H1 (cell line): ENCODE measurements at regions of chr7 and their contacts with region 1.

Region 1: DNA sequence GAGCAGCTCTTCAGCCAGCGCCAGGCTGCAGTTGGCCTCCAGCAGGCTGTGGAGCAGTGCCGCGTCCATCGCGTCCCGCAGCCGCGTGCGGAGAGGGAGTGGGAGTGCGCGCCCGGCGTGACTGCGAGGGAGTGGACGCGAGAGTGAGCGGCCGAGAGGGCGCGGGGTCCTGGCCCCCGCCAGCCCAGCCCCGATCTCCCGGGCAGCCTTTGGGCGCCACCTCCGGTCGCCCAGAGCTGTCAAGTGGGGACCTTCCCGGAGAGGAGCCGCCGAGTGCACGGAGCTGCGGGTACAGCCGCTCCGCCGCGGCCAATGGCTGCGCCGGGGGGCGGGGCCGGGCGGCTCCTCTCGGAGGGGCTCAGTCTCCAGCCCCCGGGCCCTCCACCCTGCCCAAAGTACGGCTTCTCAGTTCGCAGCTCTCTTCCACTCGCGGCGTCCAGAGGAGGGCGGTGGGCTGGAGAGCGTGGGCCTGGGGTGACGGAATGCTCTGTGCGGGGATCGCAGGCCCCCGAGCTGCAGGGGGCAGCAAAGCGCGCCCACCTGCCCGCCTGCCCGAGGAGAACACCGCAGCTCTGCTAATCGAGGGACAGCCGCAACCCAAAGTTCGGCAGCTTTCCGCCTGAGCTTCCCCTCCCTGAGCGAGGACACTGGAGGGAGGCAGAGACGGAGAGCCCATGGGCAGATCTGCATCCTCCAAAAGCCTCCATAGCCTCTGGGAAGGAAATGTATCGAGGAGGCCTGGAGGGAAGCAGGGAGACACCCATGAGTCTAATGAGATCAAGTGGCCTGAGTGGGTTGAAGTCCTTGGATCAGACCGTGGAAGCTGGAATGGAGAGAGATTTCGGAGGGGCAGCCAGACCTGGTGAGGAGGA is at the start of gene CRHR2:
- DNase-seq: peak in 1 of 2 experiments; percentile 81
- H3K4me3 ChIP-seq: peak within 1 kb of the TSS; percentile 42 to 67 (median 50)
- H3K27ac ChIP-seq: no peak within 1 kb of the TSS
- H3K4me1 ChIP-seq: peaks cover 6 to 16% (median 7%) of the 10 kb centered on the region in 4 experiments
- H3K27me3 ChIP-seq: peaks cover 10 to 49% (median 41%) of the 10 kb centered on the region in 4 experiments
- CTCF ChIP-seq: peak; percentile 45 to 63 (median 55); a peak in 3 of 4 replicates
- EP300 ChIP-seq: no peak
- POLR2A ChIP-seq: no peak
- RAD21 ChIP-seq: peak; percentile 38 to 50; a peak in 3 of 4 replicates
- total RNA-seq, gene CRHR2: 0.19 and 0.37 TPM in 2 replicates

Region 2: GRCh38 chr7:30485667-30486066 is 196.8 kb before region 1 on chr7:
- CTCF ChIA-PET with region 1: no interaction called
- POLR2A ChIA-PET with region 1: no interaction called
- DNase-seq: no peak
- H3K4me3 ChIP-seq: no peak overlapping the region
- H3K27ac ChIP-seq: no peak overlapping the region
- H3K4me1 ChIP-seq: no peaks in the 10 kb centered on the region
- H3K27me3 ChIP-seq: no peaks in the 10 kb centered on the region
- CTCF ChIP-seq: no peak
- EP300 ChIP-seq: no peak
- POLR2A ChIP-seq: no peak
- RAD21 ChIP-seq: no peak

Region 3: DNA sequence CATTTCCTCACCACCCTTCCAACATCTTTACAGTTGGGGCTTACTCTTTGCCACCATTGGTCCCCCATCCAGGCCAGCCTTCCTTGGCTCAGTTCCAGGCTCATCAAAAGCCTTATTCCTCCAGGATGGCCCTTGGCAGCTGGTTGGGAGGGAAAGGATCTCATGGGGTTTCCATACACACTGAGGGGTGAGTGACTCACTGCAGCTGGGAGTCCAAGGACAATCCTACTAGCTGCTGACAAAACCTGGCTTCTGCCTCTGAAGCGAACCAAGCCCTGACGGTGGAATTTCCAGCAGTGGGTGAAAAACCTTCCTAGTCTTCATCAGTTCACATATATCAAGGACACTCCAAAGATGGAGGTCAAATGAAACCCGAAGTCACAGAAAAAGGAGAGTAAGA is 23.1 kb before region 1 on chr7:
- CTCF ChIA-PET with region 1: interaction called, 29 read pairs
- POLR2A ChIA-PET with region 1: interaction called, 7 read pairs
- DNase-seq: no peak
- H3K4me3 ChIP-seq: no peak overlapping the region
- H3K27ac ChIP-seq: no peak overlapping the region
- H3K4me1 ChIP-seq: no peaks in the 10 kb centered on the region; a peak in 1 of 7 replicates
- H3K27me3 ChIP-seq: no peaks in the 10 kb centered on the region; a peak in 1 of 7 replicates
- CTCF ChIP-seq: no peak
- EP300 ChIP-seq: no peak
- POLR2A ChIP-seq: no peak
- RAD21 ChIP-seq: no peak

Region 4: GRCh38 chr7:30694218-30694745 is 11.8 kb after region 1 on chr7:
- CTCF ChIA-PET with region 1: interaction called, 16 read pairs
- POLR2A ChIA-PET with region 1: interaction called, 4 read pairs
- DNase-seq: no peak
- H3K4me3 ChIP-seq: no peak overlapping the region
- H3K27ac ChIP-seq: no peak overlapping the region
- H3K4me1 ChIP-seq: peaks cover 0 to 13% (median 2%) of the 10 kb centered on the region in 4 experiments; a peak in 2 of 7 replicates
- H3K27me3 ChIP-seq: no peaks in the 10 kb centered on the region
- CTCF ChIP-seq: no peak
- EP300 ChIP-seq: no peak
- POLR2A ChIP-seq: no peak
- RAD21 ChIP-seq: no peak

Region 5: DNA sequence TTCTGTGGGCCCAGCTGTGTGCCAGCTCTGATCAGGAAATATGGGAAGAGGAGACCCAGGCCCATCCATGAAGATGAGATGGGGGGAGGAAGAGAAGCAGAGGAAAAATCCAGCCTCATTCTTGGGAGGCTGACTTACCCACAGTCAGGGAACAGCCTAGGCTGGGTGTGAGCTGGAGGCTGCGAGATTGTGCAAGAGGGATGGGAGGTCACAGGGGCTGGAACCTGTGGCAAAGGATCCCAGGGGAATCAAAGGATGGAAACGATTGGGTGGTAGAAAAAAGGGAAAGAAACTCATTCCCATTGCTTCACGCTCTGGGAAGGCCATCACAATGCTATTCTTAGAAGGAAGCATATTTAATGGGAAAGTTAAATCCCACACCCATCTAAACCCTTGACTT is 26.5 kb after region 1 on chr7:
- CTCF ChIA-PET with region 1: interaction called, 26 read pairs
- POLR2A ChIA-PET with region 1: no interaction called
- DNase-seq: no peak
- H3K4me3 ChIP-seq: no peak overlapping the region
- H3K27ac ChIP-seq: no peak overlapping the region; the same call in 1 of the 2 replicates
- H3K4me1 ChIP-seq: no peaks in the 10 kb centered on the region; a peak in 2 of 7 replicates
- H3K27me3 ChIP-seq: no peaks in the 10 kb centered on the region
- CTCF ChIP-seq: no peak
- EP300 ChIP-seq: no peak
- POLR2A ChIP-seq: no peak
- RAD21 ChIP-seq: no peak

Region 6: GRCh38 chr7:30791114-30791779 is 108.8 kb after region 1 on chr7:
- CTCF ChIA-PET with region 1: interaction called, 11 read pairs
- POLR2A ChIA-PET with region 1: no interaction called
- DNase-seq: peak in 1 of 2 experiments; percentile 54
- H3K4me3 ChIP-seq: no peak overlapping the region
- H3K27ac ChIP-seq: no peak overlapping the region
- H3K4me1 ChIP-seq: 0 out of 7 replicates have a peak, but pooled peaks cover 0 to 3% (median 0%) of the 10 kb centered on the region in 4 experiments
- H3K27me3 ChIP-seq: no peaks in the 10 kb centered on the region
- CTCF ChIP-seq: peak; percentile 56 to 66 (median 60)
- EP300 ChIP-seq: no peak
- POLR2A ChIP-seq: no peak
- RAD21 ChIP-seq: peak; percentile 42 to 58; a peak in 3 of 4 replicates